Mammary epithelial cell (primary cell): ENCODE measurements at regions of chr5 and their contacts with region 1.

Region 1: GRCh38 chr5:122091936-122092600 is 14.0 kb upstream of the LOX start:
- DNase-seq: peak; percentile 35
- H3K4me3 ChIP-seq: no peak overlapping the region
- H3K27ac ChIP-seq: no peak overlapping the region
- H3K4me1 ChIP-seq: no peaks in the 10 kb centered on the region
- H3K27me3 ChIP-seq: no peaks in the 10 kb centered on the region
- CTCF ChIP-seq: peak; percentile 60 to 66

Region 2: GRCh38 chr5:122156724-122157325 is 64.8 kb after region 1 on chr5:
- CTCF ChIA-PET with region 1: interaction called, 7 read pairs
- dilution Hi-C with region 1: no loop called
- in situ Hi-C with region 1: loop called in 1 of 2 experiments (anchors 5 kb)
- intact Hi-C with region 1: loop called (anchors 1 kb)
- DNase-seq: peak; percentile 45
- H3K4me3 ChIP-seq: no peak overlapping the region
- H3K27ac ChIP-seq: no peak overlapping the region
- H3K4me1 ChIP-seq: peaks cover 3% of the 10 kb centered on the region
- H3K27me3 ChIP-seq: no peaks in the 10 kb centered on the region
- CTCF ChIP-seq: peak; percentile 43 to 59

Region 3: GRCh38 chr5:122295138-122295537 is 203.1 kb after region 1 on chr5:
- CTCF ChIA-PET with region 1: no interaction called
- dilution Hi-C with region 1: no loop called
- in situ Hi-C with region 1: no loop called
- intact Hi-C with region 1: no loop called
- DNase-seq: peak; percentile 3
- H3K4me3 ChIP-seq: no peak overlapping the region
- H3K27ac ChIP-seq: no peak overlapping the region
- H3K4me1 ChIP-seq: no peaks in the 10 kb centered on the region
- H3K27me3 ChIP-seq: no peaks in the 10 kb centered on the region
- CTCF ChIP-seq: peak; percentile 23 to 28

Region 4: DNA sequence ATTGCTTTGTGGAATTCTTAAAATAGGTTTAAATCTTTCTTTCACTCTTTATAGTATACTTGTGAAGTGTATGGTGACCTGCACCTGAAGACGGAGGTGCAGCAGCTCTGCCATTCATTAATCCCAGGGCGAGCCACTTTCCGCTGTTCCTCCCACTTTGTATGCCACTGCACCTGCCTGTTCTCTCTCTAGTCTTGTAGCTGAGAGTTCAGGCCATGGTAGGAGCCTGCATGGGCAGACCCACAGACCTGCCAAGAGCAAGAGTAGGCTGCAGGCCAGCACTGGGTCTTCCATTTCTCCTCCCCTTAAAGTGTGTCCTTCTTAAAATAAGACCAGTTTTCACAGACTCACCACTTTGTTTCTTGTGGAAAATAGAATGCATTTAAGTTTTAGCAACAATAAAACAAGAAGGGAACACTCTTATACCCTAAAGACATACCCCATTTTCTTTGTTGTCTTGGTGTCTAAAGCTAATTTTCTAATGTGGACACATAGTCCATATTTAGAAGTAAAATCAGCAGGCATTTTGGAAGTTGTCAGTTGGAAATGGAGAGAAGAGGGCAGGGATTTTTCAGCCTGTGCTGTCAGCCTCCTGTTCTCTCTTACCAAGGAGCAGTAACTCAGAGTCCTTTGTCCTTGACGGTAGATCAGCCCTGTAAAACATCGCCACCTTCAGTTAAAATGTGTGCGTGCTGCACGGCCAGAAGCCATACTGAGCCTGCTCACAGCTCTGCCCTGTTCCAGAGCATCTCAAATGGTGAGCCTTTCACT is 323.1 kb after region 1 on chr5:
- CTCF ChIA-PET with region 1: no interaction called
- dilution Hi-C with region 1: no loop called
- in situ Hi-C with region 1: loop called in 1 of 2 experiments (anchors 25 kb)
- intact Hi-C with region 1: loop called (anchors 5 kb)
- DNase-seq: peak; percentile 41
- H3K4me3 ChIP-seq: no peak overlapping the region
- H3K27ac ChIP-seq: no peak overlapping the region
- H3K4me1 ChIP-seq: no peaks in the 10 kb centered on the region
- H3K27me3 ChIP-seq: peaks cover 1% of the 10 kb centered on the region
- CTCF ChIP-seq: peak; percentile 61 to 84